ENCODE measurements at regions of chr5 and their contacts with region 1.

Region 1: DNA sequence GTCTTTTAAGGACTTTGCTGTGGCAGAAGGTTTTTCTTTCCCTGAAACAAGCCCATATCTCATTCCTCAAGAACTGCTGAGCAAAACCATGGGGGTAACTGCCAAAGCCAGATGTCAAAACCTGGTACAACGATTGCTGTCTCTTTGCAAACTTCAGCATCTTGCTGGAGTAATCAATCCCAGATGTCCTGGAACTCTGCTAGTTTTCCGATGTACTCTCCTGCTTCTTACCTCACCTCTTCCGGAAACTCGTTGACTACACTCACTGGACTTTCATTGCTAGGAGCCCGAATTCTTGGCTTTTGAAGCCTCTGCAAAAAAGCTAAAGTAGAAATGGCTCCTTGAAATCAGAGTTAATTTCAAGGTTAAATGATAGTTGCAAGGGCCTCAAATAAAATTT is 23.3 kb downstream of the RAD1 start:
- DNase-seq: no peak
- H3K4me3 ChIP-seq: no peak overlapping the region
- H3K27ac ChIP-seq: no peak overlapping the region
- H3K4me1 ChIP-seq: no peaks in the 10 kb centered on the region
- H3K27me3 ChIP-seq: no peaks in the 10 kb centered on the region
- CTCF ChIP-seq: no peak
- POLR2A ChIP-seq: no peak

Region 2: GRCh38 chr5:34669931-34670516 is 222.0 kb before region 1 on chr5:
- intact Hi-C with region 1: loop called (anchors 5 kb)
- DNase-seq: no peak
- H3K4me3 ChIP-seq: no peak overlapping the region
- H3K27ac ChIP-seq: no peak overlapping the region
- H3K4me1 ChIP-seq: no peaks in the 10 kb centered on the region
- H3K27me3 ChIP-seq: no peaks in the 10 kb centered on the region
- CTCF ChIP-seq: no peak
- POLR2A ChIP-seq: no peak

Region 3: DNA sequence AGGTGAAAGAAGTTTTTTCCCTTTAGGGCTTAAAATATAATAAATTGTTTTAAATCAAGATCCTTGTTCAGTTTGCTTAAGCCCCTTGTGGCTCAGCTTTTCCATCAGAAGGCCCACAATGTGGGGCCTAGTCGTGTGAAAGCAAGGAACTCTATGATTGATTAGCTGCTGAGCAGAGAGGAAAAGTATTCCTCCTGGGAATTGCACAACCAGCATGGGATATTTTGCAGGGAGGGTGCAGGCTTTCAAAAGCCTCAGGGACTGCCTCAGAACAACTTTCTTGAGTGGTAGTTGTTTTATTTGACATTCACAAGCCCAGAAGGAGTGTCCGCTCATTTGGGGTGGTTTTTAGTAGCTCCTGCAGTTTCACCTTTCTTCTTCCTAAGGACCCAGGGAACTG is 33.2 kb before region 1 on chr5:
- intact Hi-C with region 1: no loop called
- DNase-seq: no peak
- H3K4me3 ChIP-seq: no peak overlapping the region
- H3K27ac ChIP-seq: no peak overlapping the region
- H3K4me1 ChIP-seq: no peaks in the 10 kb centered on the region
- H3K27me3 ChIP-seq: no peaks in the 10 kb centered on the region
- CTCF ChIP-seq: no peak
- POLR2A ChIP-seq: no peak

Region 4: DNA sequence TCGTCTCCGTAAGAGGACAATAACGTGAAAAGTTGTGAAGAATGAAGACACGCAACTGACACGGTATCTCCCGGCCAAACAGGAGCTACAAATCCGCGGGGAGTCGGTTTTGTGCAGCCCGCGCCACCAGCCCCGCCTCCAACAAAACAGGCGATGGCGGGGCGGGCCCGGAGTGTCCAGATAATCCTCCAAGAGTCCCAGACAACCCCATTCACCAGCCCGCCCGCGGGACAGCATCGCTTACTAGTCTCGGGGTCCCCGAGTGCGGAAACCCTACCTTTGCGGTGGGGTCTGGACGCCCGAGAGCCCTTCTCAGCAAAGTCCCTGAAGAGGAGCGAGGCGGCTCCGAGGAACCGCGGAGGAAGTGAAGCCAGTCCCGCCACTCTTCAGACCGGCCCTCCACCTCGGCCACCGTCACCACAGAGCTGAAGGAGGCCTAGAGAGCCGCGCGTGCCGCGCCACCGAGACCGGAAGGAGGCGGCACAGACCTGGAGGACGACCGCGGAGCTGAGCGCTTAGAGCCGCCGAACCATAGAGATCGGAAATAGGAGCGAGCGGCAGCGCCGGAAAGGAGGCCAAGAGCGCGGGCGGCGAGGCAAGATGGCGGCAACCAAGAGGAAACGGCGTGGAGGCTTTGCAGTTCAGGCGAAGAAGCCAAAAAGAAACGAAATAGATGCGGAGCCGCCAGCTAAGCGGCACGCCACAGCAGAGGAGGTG is 23.3 kb after region 1 on chr5 and contains the starts of genes BRIX1 and RAD1:
- intact Hi-C with region 1: no loop called
- DNase-seq: peak; percentile 94 to 95
- H3K4me3 ChIP-seq: peak within 1 kb of the TSS; percentile 79 to 100 (median 93)
- H3K27ac ChIP-seq: peak within 1 kb of the TSS; percentile 90 to 91
- H3K4me1 ChIP-seq: peaks cover 0 to 9% of the 10 kb centered on the region in 2 donors
- H3K27me3 ChIP-seq: no peaks in the 10 kb centered on the region
- CTCF ChIP-seq: peak in 1 of 3 donors; percentile 16
- POLR2A ChIP-seq: no peak
- total RNA-seq, gene BRIX1: 18.2 to 28.8 (median 23.7) TPM
- total RNA-seq, gene RAD1: 12.8 to 23.3 (median 18.7) TPM

Region 5: GRCh38 chr5:35518104-35518503 is 626.1 kb after region 1 on chr5:
- intact Hi-C with region 1: no loop called
- DNase-seq: no peak
- H3K4me3 ChIP-seq: no peak overlapping the region
- H3K27ac ChIP-seq: no peak overlapping the region
- H3K4me1 ChIP-seq: no peaks in the 10 kb centered on the region
- H3K27me3 ChIP-seq: no peaks in the 10 kb centered on the region
- CTCF ChIP-seq: no peak
- POLR2A ChIP-seq: no peak

Region 6: DNA sequence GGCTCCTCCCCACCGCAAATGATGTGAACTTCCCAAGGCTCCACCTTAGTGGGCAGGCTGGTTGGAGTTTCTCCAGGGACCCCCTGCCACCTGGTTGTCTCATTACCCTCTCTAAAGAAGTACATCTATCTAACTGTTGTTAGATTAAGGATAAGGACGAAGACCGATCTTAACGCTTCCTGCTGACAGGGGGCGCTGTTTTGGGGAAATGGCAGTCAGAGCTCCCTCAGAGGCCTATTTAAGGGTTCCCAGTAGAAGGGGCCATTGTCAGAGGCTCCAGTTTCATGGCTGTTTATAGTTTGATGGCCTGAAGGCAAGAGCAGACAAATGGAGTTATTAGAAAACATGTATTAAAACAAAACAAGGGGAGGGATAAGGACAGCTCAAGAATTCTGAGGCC is 825.7 kb after region 1 on chr5:
- intact Hi-C with region 1: no loop called
- DNase-seq: no peak
- H3K4me3 ChIP-seq: no peak overlapping the region
- H3K27ac ChIP-seq: no peak overlapping the region
- H3K4me1 ChIP-seq: no peaks in the 10 kb centered on the region
- H3K27me3 ChIP-seq: no peaks in the 10 kb centered on the region
- CTCF ChIP-seq: no peak
- POLR2A ChIP-seq: no peak

Measured in breast epithelium (tissue), 4 donors.